ENCODE measurements at regions of chr13 and their contacts with region 1.

Region 1: DNA sequence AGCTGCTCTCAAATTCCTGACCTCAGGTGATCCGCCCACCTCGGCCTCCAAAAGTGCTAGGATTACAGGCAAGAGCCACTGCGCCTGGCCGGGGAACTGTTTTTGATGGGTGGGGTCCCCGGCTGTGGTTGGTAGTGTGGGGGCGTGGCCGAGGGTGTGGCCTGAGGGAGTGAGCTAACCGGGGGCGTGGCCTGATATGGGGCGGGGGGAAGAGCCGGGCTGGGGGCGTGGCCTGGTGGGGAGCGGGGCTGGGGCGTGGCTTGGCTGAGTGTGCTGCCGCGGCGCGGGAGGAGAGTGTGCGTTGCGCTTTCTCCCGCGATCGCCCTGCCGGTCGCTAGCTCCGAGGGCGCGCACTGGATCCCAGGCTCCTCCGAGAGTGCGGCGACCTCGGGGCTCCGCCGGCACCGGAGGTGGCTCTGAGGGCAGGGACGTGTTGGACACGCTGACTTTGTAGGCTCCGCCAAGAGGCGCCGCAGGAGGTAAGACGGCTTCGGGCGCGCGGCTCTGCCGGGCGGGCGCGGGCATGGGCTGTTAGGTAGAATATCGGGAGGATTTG is at the start of gene SPATA13:
- DNase-seq: peak; percentile 84 to 95 (median 93)
- ATAC-seq: peak; percentile 99
- H3K4me3 ChIP-seq: peak within 1 kb of the TSS; percentile 80
- H3K4me3 Mint-ChIP-seq: peak within 1 kb of the TSS; percentile 79 to 94 (median 88)
- H3K27ac ChIP-seq: peak within 1 kb of the TSS; percentile 62
- H3K27ac Mint-ChIP-seq: peak within 1 kb of the TSS in 8 of 9 donors; percentile 24 to 82 (median 65)
- H3K4me1 ChIP-seq: peaks cover 3 to 9% of the 10 kb centered on the region in 2 donors
- H3K4me1 Mint-ChIP-seq: peaks cover 9 to 19% (median 13%) of the 10 kb centered on the region in 7 donors
- H3K27me3 ChIP-seq: no peaks in the 10 kb centered on the region
- H3K27me3 Mint-ChIP-seq: peaks cover 5 to 23% (median 9%) of the 10 kb centered on the region in 5 donors
- total RNA-seq, gene SPATA13: 62.2 to 104 (median 101) TPM

Region 2: DNA sequence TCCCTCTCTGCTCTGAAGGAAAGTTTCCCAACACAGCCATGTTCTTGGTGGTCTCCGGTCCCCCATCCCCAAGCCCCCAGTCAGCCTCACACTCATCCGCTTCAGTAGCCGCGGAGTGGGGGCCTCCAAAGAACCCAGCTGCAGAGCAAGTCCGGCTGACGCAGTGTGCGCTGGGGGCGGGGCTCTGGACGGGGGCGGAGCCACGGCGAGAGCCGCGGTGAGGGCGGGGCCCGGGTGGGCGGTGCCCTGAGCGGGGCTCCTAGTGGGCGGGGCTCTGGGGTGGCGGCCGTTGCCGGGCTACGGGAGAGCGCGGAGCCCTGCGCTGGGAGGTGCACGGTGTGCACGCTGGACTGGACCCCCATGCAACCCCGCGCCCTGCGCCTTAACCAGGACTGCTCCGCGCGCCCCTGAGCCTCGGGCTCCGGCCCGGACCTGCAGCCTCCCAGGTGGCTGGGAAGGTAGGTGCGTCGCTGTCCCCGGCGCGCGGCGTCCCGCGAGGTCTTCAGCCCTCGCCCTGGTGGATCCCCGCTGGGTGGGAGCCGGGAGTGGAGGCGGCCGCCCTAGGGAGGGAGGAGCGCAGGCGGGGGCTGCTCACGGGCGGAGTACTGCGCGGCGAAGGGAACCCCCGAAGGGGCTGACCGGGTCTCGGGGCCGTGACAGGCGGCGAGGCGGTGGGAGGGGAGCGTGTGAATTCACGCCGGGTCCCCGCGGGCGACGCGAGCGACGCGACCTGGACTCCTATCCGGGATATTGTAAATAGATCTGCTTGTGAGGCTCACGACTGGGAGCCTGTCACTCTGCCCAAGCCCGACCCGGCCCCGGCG is 581.2 kb before region 1 on chr13:
- CTCF ChIA-PET with region 1: no interaction called
- POLR2A ChIA-PET with region 1: no interaction called
- intact Hi-C with region 1: loop called (anchors 1 kb)
- DNase-seq: peak; percentile 76 to 96 (median 87)
- ATAC-seq: peak; percentile 99
- H3K4me3 ChIP-seq: peak overlapping the region; percentile 79
- H3K4me3 Mint-ChIP-seq: peak overlapping the region; percentile 43 to 89 (median 81)
- H3K27ac ChIP-seq: peak overlapping the region; percentile 67
- H3K27ac Mint-ChIP-seq: peak overlapping the region in 3 of 9 donors; percentile 46 to 80 (median 65)
- H3K4me1 ChIP-seq: peaks cover 0 to 4% of the 10 kb centered on the region in 2 donors
- H3K4me1 Mint-ChIP-seq: peaks cover 10 to 22% (median 18%) of the 10 kb centered on the region in 7 donors
- H3K27me3 ChIP-seq: peaks cover 0 to 11% of the 10 kb centered on the region in 2 donors
- H3K27me3 Mint-ChIP-seq: peaks cover 34 to 72% (median 46%) of the 10 kb centered on the region in 5 donors

Region 3: GRCh38 chr13:23966691-23967615 is 193.6 kb before region 1 on chr13:
- CTCF ChIA-PET with region 1: no interaction called
- POLR2A ChIA-PET with region 1: no interaction called
- intact Hi-C with region 1: loop called (anchors 5 kb)
- DNase-seq: peak in 6 of 9 donors; percentile 19 to 58 (median 48)
- ATAC-seq: peak; percentile 79
- H3K4me3 ChIP-seq: peak overlapping the region; percentile 57
- H3K4me3 Mint-ChIP-seq: peak overlapping the region; percentile 65 to 88 (median 84)
- H3K27ac ChIP-seq: peak overlapping the region; percentile 52
- H3K27ac Mint-ChIP-seq: peak overlapping the region; percentile 18 to 93 (median 88)
- H3K4me1 ChIP-seq: peaks cover 6% of the 10 kb centered on the region in 2 donors
- H3K4me1 Mint-ChIP-seq: peaks cover 6 to 39% (median 18%) of the 10 kb centered on the region in 7 donors
- H3K27me3 ChIP-seq: no peaks in the 10 kb centered on the region
- H3K27me3 Mint-ChIP-seq: no peaks in the 10 kb centered on the region

Region 4: DNA sequence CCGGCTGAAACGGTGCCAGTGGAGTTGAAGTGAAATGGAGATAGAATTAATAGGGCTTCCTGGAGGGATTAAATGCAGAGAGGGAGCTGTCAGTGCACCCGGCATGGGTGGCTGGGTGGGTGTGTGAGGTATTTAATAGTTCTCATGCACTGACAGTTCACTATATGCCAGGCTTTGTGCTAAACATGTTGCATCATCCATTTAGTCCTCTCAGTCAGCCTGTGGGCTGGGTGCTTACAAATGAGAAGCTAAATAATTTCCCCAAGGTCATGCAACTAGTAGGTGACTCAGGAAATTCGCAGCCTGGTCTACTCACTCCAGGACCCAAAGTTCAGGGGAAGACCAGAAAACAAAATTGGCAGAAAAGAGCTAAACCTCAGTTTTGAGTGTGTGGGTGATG is 63.5 kb before region 1 on chr13:
- CTCF ChIA-PET with region 1: no interaction called
- POLR2A ChIA-PET with region 1: no interaction called
- intact Hi-C with region 1: loop called in 1 of 2 experiments (anchors 2 kb)
- DNase-seq: peak in 1 of 9 donors; percentile 53
- ATAC-seq: no peak
- H3K4me3 ChIP-seq: no peak overlapping the region
- H3K4me3 Mint-ChIP-seq: peak overlapping the region in 7 of 10 donors; percentile 13 to 78 (median 60)
- H3K27ac ChIP-seq: no peak overlapping the region
- H3K27ac Mint-ChIP-seq: peak overlapping the region in 3 of 9 donors; percentile 41 to 73 (median 71)
- H3K4me1 ChIP-seq: peaks cover 0 to 10% of the 10 kb centered on the region in 2 donors
- H3K4me1 Mint-ChIP-seq: peaks cover 10 to 22% (median 18%) of the 10 kb centered on the region in 7 donors
- H3K27me3 ChIP-seq: no peaks in the 10 kb centered on the region
- H3K27me3 Mint-ChIP-seq: peaks cover 0 to 27% (median 0%) of the 10 kb centered on the region in 5 donors

Region 5: DNA sequence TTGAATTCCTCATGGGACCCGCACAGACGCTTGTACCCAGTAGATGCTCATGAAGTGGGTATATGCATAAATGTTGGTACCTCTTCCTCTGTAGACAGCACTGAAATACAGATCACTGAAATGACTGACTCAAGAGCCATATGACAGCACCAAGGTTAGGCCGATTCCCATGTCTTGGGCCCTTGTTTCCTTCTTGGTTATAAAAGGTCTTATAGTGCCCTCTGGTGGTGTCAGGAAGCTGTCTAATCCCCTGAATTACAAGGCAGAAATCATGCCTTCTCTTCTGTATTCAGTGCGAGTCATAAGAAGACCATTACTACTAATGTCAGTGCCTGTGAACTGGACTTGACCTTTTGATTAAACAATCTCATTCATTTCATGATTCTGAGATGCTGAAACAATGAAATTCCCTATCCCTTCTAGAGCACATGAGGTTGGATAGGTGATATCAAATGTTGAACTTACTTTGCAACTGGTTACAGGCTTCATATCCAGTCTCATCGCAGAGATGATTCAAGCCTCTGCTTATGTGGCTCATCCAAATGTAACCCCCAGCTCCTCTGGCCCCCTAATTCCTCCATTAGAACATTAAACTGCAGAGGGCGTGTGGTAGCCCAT is 59.7 kb after region 1 on chr13:
- CTCF ChIA-PET with region 1: interaction called, 7 read pairs
- POLR2A ChIA-PET with region 1: no interaction called
- intact Hi-C with region 1: loop called (anchors 1 to 2 kb)
- DNase-seq: peak in 7 of 9 donors; percentile 59 to 77 (median 70)
- ATAC-seq: peak; percentile 88
- H3K4me3 ChIP-seq: no peak overlapping the region
- H3K4me3 Mint-ChIP-seq: no peak overlapping the region
- H3K27ac ChIP-seq: no peak overlapping the region
- H3K27ac Mint-ChIP-seq: peak overlapping the region in 2 of 9 donors; percentile 10 to 50
- H3K4me1 ChIP-seq: peaks cover 0 to 7% of the 10 kb centered on the region in 2 donors
- H3K4me1 Mint-ChIP-seq: peaks cover 7 to 44% (median 22%) of the 10 kb centered on the region in 7 donors
- H3K27me3 ChIP-seq: no peaks in the 10 kb centered on the region
- H3K27me3 Mint-ChIP-seq: no peaks in the 10 kb centered on the region

Region 6: GRCh38 chr13:24270639-24271141 is 110.2 kb after region 1 on chr13:
- CTCF ChIA-PET with region 1: no interaction called
- POLR2A ChIA-PET with region 1: no interaction called
- intact Hi-C with region 1: loop called in 1 of 2 experiments (anchors 2 kb)
- DNase-seq: peak in 8 of 9 donors; percentile 57 to 72 (median 66)
- ATAC-seq: peak; percentile 56
- H3K4me3 ChIP-seq: peak overlapping the region; percentile 56
- H3K4me3 Mint-ChIP-seq: peak overlapping the region; percentile 87 to 99 (median 92)
- H3K27ac ChIP-seq: peak overlapping the region; percentile 94
- H3K27ac Mint-ChIP-seq: peak overlapping the region; percentile 97 to 100 (median 99)
- H3K4me1 ChIP-seq: peaks cover 82 to 83% of the 10 kb centered on the region in 2 donors
- H3K4me1 Mint-ChIP-seq: peaks cover 66 to 97% (median 93%) of the 10 kb centered on the region in 7 donors
- H3K27me3 ChIP-seq: no peaks in the 10 kb centered on the region
- H3K27me3 Mint-ChIP-seq: peaks cover 0 to 3% (median 0%) of the 10 kb centered on the region in 5 donors

Region 7: GRCh38 chr13:25301347-25302047 is 1141.0 kb after region 1 on chr13 and contains the start of gene NUP58:
- CTCF ChIA-PET with region 1: no interaction called
- POLR2A ChIA-PET with region 1: no interaction called
- intact Hi-C with region 1: loop called in 1 of 2 experiments (anchors 5 kb)
- DNase-seq: peak; percentile 83 to 94 (median 92)
- ATAC-seq: peak; percentile 99
- H3K4me3 ChIP-seq: peak within 1 kb of the TSS; percentile 64
- H3K4me3 Mint-ChIP-seq: peak within 1 kb of the TSS; percentile 86 to 95 (median 92)
- H3K27ac ChIP-seq: peak within 1 kb of the TSS; percentile 93
- H3K27ac Mint-ChIP-seq: peak within 1 kb of the TSS; percentile 87 to 97 (median 93)
- H3K4me1 ChIP-seq: peaks cover 13 to 22% of the 10 kb centered on the region in 2 donors
- H3K4me1 Mint-ChIP-seq: peaks cover 21 to 51% (median 47%) of the 10 kb centered on the region in 7 donors
- H3K27me3 ChIP-seq: peaks cover 0 to 5% of the 10 kb centered on the region in 2 donors
- H3K27me3 Mint-ChIP-seq: peaks cover 7 to 19% (median 10%) of the 10 kb centered on the region in 5 donors
- total RNA-seq, gene NUP58: 41.1 to 89.1 (median 57.0) TPM

Measured in naive thymus-derived CD4-positive, alpha-beta T cell (primary cell).